GM23248 (cell line): ENCODE measurements at regions of chr6 and their contacts with region 1.

Region 1: DNA sequence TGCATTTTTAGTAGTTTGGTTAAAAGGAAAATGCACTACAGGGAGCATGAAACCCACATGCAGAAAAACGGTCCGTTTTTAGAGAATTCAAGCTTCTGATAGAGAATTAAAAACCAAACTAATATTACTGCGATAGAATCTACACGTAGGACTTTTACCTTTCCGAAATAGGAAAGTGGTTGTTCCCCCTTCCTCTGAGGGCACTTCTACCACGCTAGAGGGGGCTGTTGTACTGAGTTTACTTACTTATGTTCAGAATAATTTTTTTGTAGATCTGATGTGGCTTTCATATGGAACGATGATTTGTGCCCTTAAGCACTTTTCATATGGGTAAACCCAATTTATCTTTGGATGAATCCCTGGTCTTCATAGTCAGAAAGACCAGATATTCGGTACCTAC is 264.3 kb upstream of the PLN start:
- DNase-seq: peak; percentile 80
- H3K4me3 ChIP-seq: peak overlapping the region; percentile 65
- H3K27ac ChIP-seq: no peak overlapping the region
- H3K4me1 ChIP-seq: peaks cover 4% of the 10 kb centered on the region; the same call in 1 of the 2 replicates
- H3K27me3 ChIP-seq: no peaks in the 10 kb centered on the region

Region 2: DNA sequence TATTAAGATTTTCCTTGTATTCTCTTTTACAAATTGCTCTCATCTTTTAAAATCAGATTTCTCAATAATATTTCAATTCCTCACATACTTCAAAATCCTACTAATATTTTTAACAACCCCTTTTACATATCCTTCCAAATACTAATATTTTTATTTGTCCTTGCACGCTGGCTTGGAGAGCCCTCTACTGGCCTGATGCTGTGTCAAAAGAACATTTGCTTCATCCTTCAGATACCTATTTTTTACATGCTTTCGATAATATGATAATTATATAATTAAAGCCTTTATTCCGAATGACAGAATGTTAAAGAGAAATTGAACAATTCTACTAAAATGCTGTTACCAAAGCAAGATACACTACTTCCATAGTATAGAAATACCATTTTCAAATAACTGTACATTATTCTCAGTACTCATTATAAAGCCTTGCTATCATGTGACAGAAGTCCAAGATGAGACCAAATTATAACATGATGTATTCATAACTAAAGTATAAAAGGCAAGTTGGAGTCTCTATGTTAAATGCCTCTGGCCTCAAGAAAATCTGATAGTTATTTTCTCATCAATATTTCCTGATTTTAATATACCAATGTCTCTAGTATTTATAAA is 225.3 kb after region 1 on chr6:
- in situ Hi-C with region 1: loop called (anchors 10 kb)
- DNase-seq: peak; percentile 58
- H3K4me3 ChIP-seq: no peak overlapping the region
- H3K27ac ChIP-seq: no peak overlapping the region
- H3K4me1 ChIP-seq: no peaks in the 10 kb centered on the region
- H3K27me3 ChIP-seq: no peaks in the 10 kb centered on the region

Region 3: DNA sequence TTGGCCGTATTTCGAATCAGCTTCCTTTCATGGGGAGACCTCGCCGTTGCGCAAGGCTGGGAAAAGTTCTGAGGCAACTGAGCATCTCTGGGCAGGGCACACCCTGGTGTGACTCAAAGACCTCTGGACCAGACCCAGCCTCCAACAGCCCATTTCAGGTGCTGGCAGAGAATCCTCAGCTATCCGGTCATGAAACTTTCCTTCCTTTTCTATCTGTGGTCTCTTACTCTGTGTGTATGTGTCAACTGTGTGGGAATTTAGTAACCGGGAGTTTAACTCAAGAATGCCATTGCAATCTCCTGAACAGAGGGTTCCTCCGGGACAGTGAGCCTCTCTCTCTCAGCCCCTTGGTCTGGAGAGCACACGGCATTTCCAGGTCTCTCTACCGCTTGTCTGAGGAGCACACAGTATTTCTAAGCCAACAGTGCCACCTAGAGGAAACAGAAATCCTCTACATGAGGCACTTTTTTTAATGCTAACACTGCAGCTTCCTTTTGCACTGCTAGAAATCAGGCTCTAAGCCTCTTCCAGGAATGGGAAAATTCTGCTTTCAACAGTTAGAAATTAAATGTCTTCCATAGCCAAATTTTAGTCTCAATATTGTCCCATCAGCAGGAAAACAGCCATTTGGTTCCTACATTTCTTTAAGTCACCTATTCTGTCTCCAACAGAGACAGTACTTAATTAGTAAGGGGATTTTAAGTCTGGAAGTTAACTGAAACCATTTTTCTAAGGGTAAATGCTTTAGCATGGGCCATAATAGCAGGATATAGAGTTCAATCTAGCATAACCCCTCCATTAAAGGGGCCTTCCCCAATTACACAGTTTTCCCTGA is 297.0 kb after region 1 on chr6:
- in situ Hi-C with region 1: loop called (anchors 10 kb)
- DNase-seq: peak; percentile 91
- H3K4me3 ChIP-seq: peak overlapping the region; percentile 34; the same call in 1 of the 2 replicates
- H3K27ac ChIP-seq: peak overlapping the region; percentile 76
- H3K4me1 ChIP-seq: peaks cover 19% of the 10 kb centered on the region
- H3K27me3 ChIP-seq: no peaks in the 10 kb centered on the region

Region 4: GRCh38 chr6:118787724-118788423 is 504.1 kb after region 1 on chr6:
- in situ Hi-C with region 1: loop called (anchors 10 kb)
- DNase-seq: peak; percentile 45
- H3K4me3 ChIP-seq: no peak overlapping the region
- H3K27ac ChIP-seq: no peak overlapping the region
- H3K4me1 ChIP-seq: no peaks in the 10 kb centered on the region; the same call in 1 of the 2 replicates
- H3K27me3 ChIP-seq: no peaks in the 10 kb centered on the region

Region 5: GRCh38 chr6:119110601-119111548 is 827.1 kb after region 1 on chr6:
- in situ Hi-C with region 1: loop called (anchors 25 kb)
- DNase-seq: peak; percentile 77
- H3K4me3 ChIP-seq: no peak overlapping the region
- H3K27ac ChIP-seq: peak overlapping the region; percentile 43; the same call in 1 of the 2 replicates
- H3K4me1 ChIP-seq: peaks cover 15% of the 10 kb centered on the region
- H3K27me3 ChIP-seq: no peaks in the 10 kb centered on the region

Region 6: GRCh38 chr6:119158057-119158848 is 874.5 kb after region 1 on chr6:
- in situ Hi-C with region 1: no loop called
- DNase-seq: peak; percentile 73
- H3K4me3 ChIP-seq: no peak overlapping the region
- H3K27ac ChIP-seq: no peak overlapping the region
- H3K4me1 ChIP-seq: no peaks in the 10 kb centered on the region
- H3K27me3 ChIP-seq: no peaks in the 10 kb centered on the region